ENCODE measurements at regions of chr17 and their contacts with region 1.

Region 1: DNA sequence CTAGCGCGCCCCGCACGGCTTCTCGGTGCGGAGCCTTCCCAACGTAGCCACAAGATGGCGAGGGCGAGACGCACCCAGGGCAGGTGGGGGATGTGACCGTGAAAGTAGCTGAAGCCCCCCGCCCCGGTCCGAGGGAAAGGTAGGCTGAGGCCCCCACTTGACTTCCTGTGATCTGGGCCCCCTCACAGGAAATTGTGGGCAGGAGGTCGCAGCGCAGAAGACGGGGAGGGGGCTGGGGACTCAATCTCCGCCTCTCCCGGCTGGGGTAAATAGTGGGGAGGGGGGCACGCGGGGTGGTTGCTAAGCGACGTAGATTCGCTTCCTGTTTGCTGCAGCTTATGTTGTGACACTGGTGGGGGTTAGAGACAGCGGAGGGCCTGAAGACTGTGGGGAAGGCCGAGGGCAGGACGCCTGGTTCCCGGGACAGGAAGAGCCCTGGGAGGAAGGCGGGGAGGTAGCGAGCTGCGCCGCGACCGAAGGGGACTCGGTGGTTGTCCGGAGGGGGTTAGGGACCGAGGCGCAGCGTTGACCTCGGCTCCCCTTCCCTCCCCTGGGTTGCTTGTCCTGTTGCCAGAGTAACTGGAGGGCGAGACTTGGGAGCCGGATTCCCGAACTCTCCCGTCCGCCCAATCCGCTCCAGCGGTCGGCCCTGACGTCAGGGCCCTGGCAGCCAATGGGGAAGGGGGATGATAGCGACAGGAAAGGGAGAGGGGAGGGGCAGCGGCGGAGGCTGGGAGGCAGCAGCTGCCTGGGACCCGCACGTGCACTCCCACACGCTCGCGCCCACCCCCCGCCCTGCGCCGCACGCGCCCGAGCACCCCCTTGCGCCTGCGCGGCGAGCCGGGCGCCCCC is 1.2 kb downstream of the KDM6B start:
- DNase-seq: peak; percentile 91
- H3K4me3 ChIP-seq: peak overlapping the region; percentile 83
- CTCF ChIP-seq: peak; percentile 95

Region 2: GRCh38 chr17:7818746-7819645 is 16.2 kb before region 1 on chr17:
- CTCF ChIA-PET with region 1: interaction called, 30 read pairs
- POLR2A ChIA-PET with region 1: no interaction called
- DNase-seq: no peak
- H3K4me3 ChIP-seq: no peak overlapping the region
- CTCF ChIP-seq: no peak

Region 3: GRCh38 chr17:7851438-7852256 is 16.5 kb after region 1 on chr17:
- CTCF ChIA-PET with region 1: interaction called, 40 read pairs
- POLR2A ChIA-PET with region 1: interaction called, 23 read pairs
- DNase-seq: no peak
- H3K4me3 ChIP-seq: no peak overlapping the region
- CTCF ChIP-seq: peak; percentile 93

Measured in AG04449 (cell line).